Activated CD8-positive, alpha-beta memory T cell treated with anti-CD3 and anti-CD28 coated beads, Interleukin-2, amount 10 ng/mL, durations not matched to agents 7 days and 5 days (primary cell): ENCODE measurements at regions of chr1 and their contacts with region 1.

Region 1: GRCh38 chr1:53182111-53182593 is 14.5 kb upstream of the CPT2 start:
- DNase-seq: peak; percentile 89
- ATAC-seq: peak; percentile 90
- H3K4me3 Mint-ChIP-seq: no peak overlapping the region
- H3K27ac Mint-ChIP-seq: no peak overlapping the region
- H3K4me1 Mint-ChIP-seq: no peaks in the 10 kb centered on the region
- H3K27me3 Mint-ChIP-seq: peaks cover 14% of the 10 kb centered on the region

Region 2: GRCh38 chr1:52904927-52905698 is 277.0 kb before region 1 on chr1:
- CTCF ChIA-PET with region 1: interaction called, 17 read pairs
- DNase-seq: peak; percentile 61
- ATAC-seq: peak; percentile 87
- H3K4me3 Mint-ChIP-seq: no peak overlapping the region
- H3K27ac Mint-ChIP-seq: no peak overlapping the region
- H3K4me1 Mint-ChIP-seq: no peaks in the 10 kb centered on the region
- H3K27me3 Mint-ChIP-seq: no peaks in the 10 kb centered on the region

Region 3: DNA sequence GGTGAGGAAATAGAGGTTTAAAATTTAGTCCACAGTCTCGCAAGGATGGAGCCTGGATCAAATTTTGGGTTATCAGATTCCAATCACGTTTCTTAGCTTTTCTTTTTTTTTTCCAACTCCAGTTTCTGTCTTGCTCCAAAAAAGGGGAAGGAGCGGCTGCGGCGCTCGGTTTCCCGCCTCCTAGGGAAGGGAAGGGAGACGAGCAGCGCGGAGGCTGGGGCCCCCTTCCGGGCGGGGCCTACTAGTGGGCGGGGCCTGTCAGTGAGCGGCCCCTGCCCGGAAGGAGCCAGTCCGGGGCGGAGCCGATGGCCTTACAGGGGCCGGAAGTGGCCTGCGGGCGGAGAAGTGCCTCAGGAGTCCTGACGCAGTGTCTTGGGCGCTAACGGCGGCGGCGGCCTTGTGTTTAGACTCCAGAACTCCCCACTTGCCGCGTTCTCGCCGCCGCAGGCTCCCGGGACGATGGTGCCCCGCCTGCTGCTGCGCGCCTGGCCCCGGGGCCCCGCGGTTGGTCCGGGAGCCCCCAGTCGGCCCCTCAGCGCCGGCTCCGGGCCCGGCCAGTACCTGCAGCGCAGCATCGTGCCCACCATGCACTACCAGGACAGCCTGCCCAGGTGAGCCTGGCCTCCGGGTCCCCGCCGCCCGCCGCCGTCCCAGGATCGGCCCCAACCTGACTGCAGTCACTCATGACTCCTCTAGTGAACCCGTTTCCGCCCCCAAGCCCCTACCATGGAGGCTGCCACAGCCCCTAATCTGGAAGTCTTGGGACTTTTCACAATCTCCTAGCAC is 14.5 kb after region 1 on chr1 and contains the start of gene CPT2:
- CTCF ChIA-PET with region 1: interaction called, 15 read pairs
- DNase-seq: peak; percentile 97
- ATAC-seq: peak; percentile 99
- H3K4me3 Mint-ChIP-seq: peak within 1 kb of the TSS; percentile 89
- H3K27ac Mint-ChIP-seq: peak within 1 kb of the TSS; percentile 97
- H3K4me1 Mint-ChIP-seq: peaks cover 27% of the 10 kb centered on the region
- H3K27me3 Mint-ChIP-seq: no peaks in the 10 kb centered on the region
- total RNA-seq, gene CPT2: 11.5 to 13.5 TPM